Gastrocnemius medialis (tissue), 4 donors: ENCODE measurements at regions of chr2 and their contacts with region 1.

Region 1: GRCh38 chr2:85302121-85302520 is 25.7 kb downstream of the TGOLN2 start:
- DNase-seq: no peak
- ATAC-seq: no peak
- H3K4me3 ChIP-seq: no peak overlapping the region
- H3K27ac ChIP-seq: no peak overlapping the region
- H3K4me1 ChIP-seq: peaks cover 4 to 6% of the 10 kb centered on the region in 2 donors
- H3K27me3 ChIP-seq: no peaks in the 10 kb centered on the region
- CTCF ChIP-seq: no peak
- POLR2A ChIP-seq: no peak

Region 2: GRCh38 chr2:85066874-85067351 is 235.2 kb before region 1 on chr2:
- in situ Hi-C with region 1: no loop called
- intact Hi-C with region 1: loop called (anchors 1 kb)
- DNase-seq: peak; percentile 33 to 59
- ATAC-seq: peak; percentile 60 to 81
- H3K4me3 ChIP-seq: peak overlapping the region; percentile 41 to 48 (median 43)
- H3K27ac ChIP-seq: no peak overlapping the region
- H3K4me1 ChIP-seq: peaks cover 5 to 8% of the 10 kb centered on the region in 2 donors
- H3K27me3 ChIP-seq: peaks cover 0 to 3% (median 0%) of the 10 kb centered on the region in 3 donors
- CTCF ChIP-seq: peak; percentile 67 to 85 (median 78)
- POLR2A ChIP-seq: no peak

Region 3: DNA sequence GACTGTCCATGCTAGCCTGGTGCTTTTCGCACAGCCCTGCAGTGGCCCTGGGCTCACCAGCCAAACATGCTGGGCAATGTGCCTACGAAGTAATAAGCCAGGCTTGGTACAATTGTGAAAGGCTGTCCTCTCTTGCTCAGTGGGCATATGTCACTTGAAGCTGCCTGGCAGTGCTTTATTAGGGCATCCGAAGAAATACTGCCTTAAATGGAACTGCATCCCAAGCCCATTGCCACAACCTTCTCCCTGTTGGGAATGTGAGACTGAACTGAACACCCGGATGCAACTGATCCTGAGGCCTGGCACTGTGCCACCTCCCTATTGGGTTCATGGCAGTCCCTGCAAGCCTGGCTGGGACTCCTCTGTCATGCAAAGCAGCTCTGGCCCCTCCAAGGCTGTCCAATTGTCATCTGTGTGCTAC is 92.2 kb after region 1 on chr2:
- in situ Hi-C with region 1: no loop called
- intact Hi-C with region 1: no loop called
- DNase-seq: peak; percentile 59 to 88
- ATAC-seq: peak; percentile 90 to 95
- H3K4me3 ChIP-seq: no peak overlapping the region
- H3K27ac ChIP-seq: peak overlapping the region; percentile 77 to 85 (median 82)
- H3K4me1 ChIP-seq: peaks cover 12 to 15% of the 10 kb centered on the region in 2 donors
- H3K27me3 ChIP-seq: no peaks in the 10 kb centered on the region
- CTCF ChIP-seq: no peak
- POLR2A ChIP-seq: no peak

Region 4: GRCh38 chr2:85516653-85517406 is 214.7 kb after region 1 on chr2:
- in situ Hi-C with region 1: no loop called
- intact Hi-C with region 1: no loop called
- DNase-seq: no peak
- ATAC-seq: no peak
- H3K4me3 ChIP-seq: no peak overlapping the region
- H3K27ac ChIP-seq: no peak overlapping the region
- H3K4me1 ChIP-seq: no peaks in the 10 kb centered on the region
- H3K27me3 ChIP-seq: no peaks in the 10 kb centered on the region
- CTCF ChIP-seq: no peak
- POLR2A ChIP-seq: no peak